ENCODE measurements at regions of chr2 and their contacts with region 1.

Region 1: GRCh38 chr2:204545023-204545860 is at the start of gene PARD3B:
- DNase-seq: peak; percentile 62
- ATAC-seq: peak; percentile 94
- H3K4me3 ChIP-seq: peak within 1 kb of the TSS; percentile 83
- H3K27ac ChIP-seq: peak within 1 kb of the TSS; percentile 96
- H3K4me1 ChIP-seq: peaks cover 7% of the 10 kb centered on the region; the same call in 1 of the 2 replicates
- H3K27me3 ChIP-seq: no peaks in the 10 kb centered on the region
- CTCF ChIP-seq: no peak
- POLR2A ChIP-seq: peak; percentile 41; the same call in 1 of the 2 replicates
- RAD21 ChIP-seq: no peak
- total RNA-seq, gene PARD3B: 15.3 and 15.6 TPM in 2 replicates

Region 2: GRCh38 chr2:204452464-204453023 is 92.7 kb before region 1 on chr2:
- CTCF ChIA-PET with region 1: no interaction called
- POLR2A ChIA-PET with region 1: no interaction called
- dilution Hi-C with region 1: no loop called
- in situ Hi-C with region 1: no loop called
- intact Hi-C with region 1: loop called (anchors 2 kb)
- DNase-seq: peak; percentile 98
- ATAC-seq: peak; percentile 98
- H3K4me3 ChIP-seq: peak overlapping the region; percentile 22; the same call in 1 of the 2 replicates
- H3K27ac ChIP-seq: peak overlapping the region; percentile 31; the same call in 1 of the 2 replicates
- H3K4me1 ChIP-seq: peaks cover 7% of the 10 kb centered on the region
- H3K27me3 ChIP-seq: no peaks in the 10 kb centered on the region
- CTCF ChIP-seq: no peak
- POLR2A ChIP-seq: peak; percentile 72
- RAD21 ChIP-seq: no peak; the same call in none of the 2 replicates

Region 3: DNA sequence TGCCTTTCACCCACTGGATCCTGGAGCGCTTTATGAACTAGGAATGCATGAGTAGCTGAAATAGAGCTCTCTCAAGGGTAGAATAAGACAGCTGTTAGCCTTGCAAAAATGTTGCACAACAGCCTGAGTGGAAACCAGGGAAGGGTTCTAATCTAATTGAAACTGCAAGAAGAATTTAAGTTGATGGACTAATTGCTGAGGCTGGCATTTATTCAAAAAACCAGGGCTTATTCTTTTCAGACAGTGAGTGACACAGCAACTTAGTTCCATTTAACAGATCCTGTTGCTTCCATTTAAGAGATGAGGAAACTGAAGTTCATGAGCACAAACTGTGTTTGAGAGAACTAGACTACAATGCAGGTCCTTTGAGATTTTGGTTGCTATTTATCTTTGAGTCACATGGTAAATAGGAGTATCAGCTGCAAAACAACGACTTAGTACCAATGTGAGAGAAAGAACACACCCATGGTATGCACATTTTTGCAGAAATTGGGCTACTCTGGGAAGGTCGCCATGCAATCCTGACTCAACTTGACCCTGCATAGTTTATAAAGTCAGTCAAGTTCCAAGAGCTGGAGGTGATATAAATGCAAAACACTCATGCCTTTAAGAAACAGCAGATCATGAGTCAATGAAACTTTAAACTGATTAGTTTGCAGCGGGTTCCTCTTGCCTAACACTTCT is 76.4 kb before region 1 on chr2:
- CTCF ChIA-PET with region 1: no interaction called
- POLR2A ChIA-PET with region 1: no interaction called
- dilution Hi-C with region 1: no loop called
- in situ Hi-C with region 1: no loop called
- intact Hi-C with region 1: loop called (anchors 5 kb)
- DNase-seq: peak; percentile 86
- ATAC-seq: peak; percentile 93
- H3K4me3 ChIP-seq: no peak overlapping the region
- H3K27ac ChIP-seq: peak overlapping the region; percentile 73; the same call in 1 of the 2 replicates
- H3K4me1 ChIP-seq: peaks cover 11% of the 10 kb centered on the region
- H3K27me3 ChIP-seq: no peaks in the 10 kb centered on the region
- CTCF ChIP-seq: no peak
- POLR2A ChIP-seq: no peak
- RAD21 ChIP-seq: no peak

Region 4: DNA sequence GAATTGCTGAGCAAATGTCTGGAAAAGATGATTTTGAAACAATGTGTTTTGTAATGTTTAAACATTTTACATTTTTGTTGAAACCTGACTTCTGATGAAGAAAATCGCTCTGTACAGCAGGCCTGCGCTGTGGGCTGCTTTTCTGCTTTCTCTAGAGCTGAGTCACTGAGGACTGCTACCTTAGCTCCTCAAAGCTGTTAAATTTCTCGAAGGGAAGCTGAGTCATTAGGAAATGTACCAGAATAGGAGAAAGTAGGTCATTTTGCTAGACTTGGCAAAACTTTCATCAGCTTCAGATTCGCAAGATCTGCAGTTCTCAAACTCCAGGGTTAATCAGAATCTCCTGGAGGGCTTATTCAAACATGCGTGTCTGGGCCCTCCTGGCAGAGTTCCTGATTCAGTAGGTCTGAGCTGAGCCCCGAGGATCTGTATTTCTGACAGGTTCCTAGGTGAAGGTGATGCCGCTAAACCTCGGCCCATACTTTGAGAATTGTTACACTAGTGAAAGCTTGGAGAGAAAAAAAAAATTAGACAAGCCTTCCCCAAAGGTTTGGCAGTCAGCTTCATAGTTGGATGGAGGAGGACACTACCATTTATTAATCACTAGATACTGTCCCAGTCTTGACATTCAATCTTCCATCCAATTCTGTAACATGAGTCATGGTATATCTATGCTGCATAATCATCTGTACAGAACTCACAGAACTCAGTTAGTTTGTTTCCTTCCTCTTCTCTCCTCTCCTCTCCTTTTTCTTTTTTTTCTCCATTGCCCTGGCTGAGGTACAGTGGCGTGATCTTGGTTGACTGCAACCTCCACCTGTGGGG is 297.6 kb after region 1 on chr2:
- CTCF ChIA-PET with region 1: no interaction called
- POLR2A ChIA-PET with region 1: no interaction called
- dilution Hi-C with region 1: no loop called
- in situ Hi-C with region 1: no loop called
- intact Hi-C with region 1: loop called (anchors 10 kb)
- DNase-seq: peak; percentile 96
- ATAC-seq: peak; percentile 99
- H3K4me3 ChIP-seq: no peak overlapping the region
- H3K27ac ChIP-seq: peak overlapping the region; percentile 76; the same call in 1 of the 2 replicates
- H3K4me1 ChIP-seq: peaks cover 5% of the 10 kb centered on the region
- H3K27me3 ChIP-seq: no peaks in the 10 kb centered on the region
- CTCF ChIP-seq: no peak
- POLR2A ChIP-seq: no peak
- RAD21 ChIP-seq: no peak

Measured in IMR-90 (cell line).